Colonic mucosa (tissue), 4 donors: ENCODE measurements at regions of chr11 and their contacts with region 1.

Region 1: GRCh38 chr11:18321980-18322711 is at the starts of genes GTF2H1 and HPS5:
- DNase-seq: peak; percentile 99
- H3K4me3 ChIP-seq: peak within 1 kb of the TSS; percentile 70
- H3K27ac ChIP-seq: peak within 1 kb of the TSS; percentile 89
- H3K4me1 ChIP-seq: peaks cover 26% of the 10 kb centered on the region
- H3K27me3 ChIP-seq: no peaks in the 10 kb centered on the region
- CTCF ChIP-seq: no peak
- total RNA-seq, gene GTF2H1: 23.5 to 26.2 TPM
- total RNA-seq, gene HPS5: 9.6 to 10.6 TPM

Region 2: GRCh38 chr11:18395735-18396504 is 73.8 kb after region 1 on chr11:
- intact Hi-C with region 1: loop called (anchors 5 kb)
- DNase-seq: peak; percentile 98
- H3K4me3 ChIP-seq: peak overlapping the region; percentile 91
- H3K27ac ChIP-seq: peak overlapping the region; percentile 97
- H3K4me1 ChIP-seq: peaks cover 3% of the 10 kb centered on the region
- H3K27me3 ChIP-seq: no peaks in the 10 kb centered on the region
- CTCF ChIP-seq: no peak

Region 3: DNA sequence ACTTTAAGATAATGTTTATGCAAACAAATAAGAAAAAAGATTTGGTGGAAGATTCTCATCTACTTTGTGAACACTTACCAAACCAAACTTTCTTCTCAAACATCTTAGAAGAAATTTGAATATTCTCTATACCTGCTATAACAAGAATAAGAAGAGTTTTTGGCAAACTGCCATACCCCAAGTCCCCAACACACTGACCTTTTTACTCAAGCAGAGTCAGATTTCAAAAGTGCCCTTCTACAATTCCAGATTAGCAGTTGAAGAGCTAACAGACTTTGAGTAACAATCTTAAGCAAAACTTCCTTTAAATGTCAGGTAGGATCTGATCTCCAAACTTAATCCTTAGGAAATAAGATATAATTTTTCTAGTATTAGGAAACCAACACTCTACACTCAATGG is 170.7 kb after region 1 on chr11:
- intact Hi-C with region 1: loop called (anchors 10 kb)
- DNase-seq: no peak
- H3K4me3 ChIP-seq: no peak overlapping the region
- H3K27ac ChIP-seq: no peak overlapping the region
- H3K4me1 ChIP-seq: no peaks in the 10 kb centered on the region
- H3K27me3 ChIP-seq: no peaks in the 10 kb centered on the region
- CTCF ChIP-seq: no peak

Region 4: DNA sequence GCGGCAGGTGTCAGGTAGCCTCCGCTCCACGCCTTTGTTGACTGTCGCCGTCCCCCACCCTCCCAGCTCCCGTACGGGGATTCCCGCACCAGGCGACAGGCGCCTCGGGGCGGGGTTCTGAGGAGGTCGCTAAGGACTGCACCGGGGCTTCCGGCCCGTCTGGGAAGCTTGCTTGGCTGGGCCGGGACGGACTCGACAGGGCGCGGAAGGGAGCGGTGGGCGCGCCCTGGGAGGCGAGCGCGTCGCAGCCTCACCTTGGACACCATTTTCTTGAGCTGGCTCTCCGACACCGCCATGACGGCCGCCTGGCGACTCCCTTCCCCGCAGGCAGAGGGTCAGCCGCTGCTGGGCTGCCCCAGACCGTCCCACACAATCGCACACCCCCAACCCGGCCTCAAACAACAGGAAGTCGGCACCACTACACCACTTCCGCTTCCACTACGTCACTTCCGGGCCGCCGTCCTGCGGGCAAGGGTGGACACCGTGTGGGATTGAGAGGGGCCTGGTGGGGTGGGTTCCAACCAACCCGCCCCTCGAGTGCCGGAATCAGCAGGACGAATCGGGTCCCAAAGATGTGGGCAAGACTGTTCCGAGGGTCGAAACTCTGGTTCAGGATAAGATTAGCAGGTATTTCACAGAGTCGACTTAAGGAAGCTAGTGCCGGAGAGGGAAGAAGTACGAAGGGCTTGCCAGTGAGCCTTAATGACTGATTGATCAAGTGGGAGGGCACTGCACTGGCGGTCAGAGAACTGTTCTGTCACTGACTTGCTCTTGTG is 204.6 kb after region 1 on chr11 and contains the start of gene TSG101:
- intact Hi-C with region 1: loop called (anchors 10 kb)
- DNase-seq: peak; percentile 98
- H3K4me3 ChIP-seq: peak within 1 kb of the TSS; percentile 81
- H3K27ac ChIP-seq: peak within 1 kb of the TSS; percentile 91
- H3K4me1 ChIP-seq: no peaks in the 10 kb centered on the region
- H3K27me3 ChIP-seq: no peaks in the 10 kb centered on the region
- CTCF ChIP-seq: no peak
- total RNA-seq, gene TSG101: 54.0 to 64.9 TPM